ENCODE measurements at regions of chr17 and their contacts with region 1.

Region 1: GRCh38 chr17:4966844-4967538 is 626 bp downstream of the SPAG7 start:
- DNase-seq: peak; percentile 100
- ATAC-seq: peak; percentile 89 to 95
- H3K4me3 ChIP-seq: peak overlapping the region; percentile 63
- H3K27ac ChIP-seq: peak overlapping the region; percentile 94 to 95
- H3K4me1 ChIP-seq: peaks cover 21% of the 10 kb centered on the region
- CTCF ChIP-seq: no peak
- EP300 ChIP-seq: no peak
- POLR2A ChIP-seq: peak; percentile 59; the same call in 1 of the 2 replicates
- RAD21 ChIP-seq: peak in 1 of 2 experiments; percentile 10; a peak in 1 of 5 replicates

Region 2: GRCh38 chr17:4895657-4896331 is 71.2 kb before region 1 on chr17:
- CTCF ChIA-PET with region 1: no interaction called
- POLR2A ChIA-PET with region 1: no interaction called
- DNase-seq: no peak
- ATAC-seq: peak in 1 of 2 experiments; percentile 42; a peak in 3 of 6 replicates
- H3K4me3 ChIP-seq: no peak overlapping the region
- H3K27ac ChIP-seq: no peak overlapping the region
- H3K4me1 ChIP-seq: no peaks in the 10 kb centered on the region
- CTCF ChIP-seq: no peak
- EP300 ChIP-seq: no peak
- POLR2A ChIP-seq: no peak
- RAD21 ChIP-seq: 0 out of 5 replicates have a peak, but pooled peaks of 1 of the 2 experiments have one; percentile 3

Region 3: DNA sequence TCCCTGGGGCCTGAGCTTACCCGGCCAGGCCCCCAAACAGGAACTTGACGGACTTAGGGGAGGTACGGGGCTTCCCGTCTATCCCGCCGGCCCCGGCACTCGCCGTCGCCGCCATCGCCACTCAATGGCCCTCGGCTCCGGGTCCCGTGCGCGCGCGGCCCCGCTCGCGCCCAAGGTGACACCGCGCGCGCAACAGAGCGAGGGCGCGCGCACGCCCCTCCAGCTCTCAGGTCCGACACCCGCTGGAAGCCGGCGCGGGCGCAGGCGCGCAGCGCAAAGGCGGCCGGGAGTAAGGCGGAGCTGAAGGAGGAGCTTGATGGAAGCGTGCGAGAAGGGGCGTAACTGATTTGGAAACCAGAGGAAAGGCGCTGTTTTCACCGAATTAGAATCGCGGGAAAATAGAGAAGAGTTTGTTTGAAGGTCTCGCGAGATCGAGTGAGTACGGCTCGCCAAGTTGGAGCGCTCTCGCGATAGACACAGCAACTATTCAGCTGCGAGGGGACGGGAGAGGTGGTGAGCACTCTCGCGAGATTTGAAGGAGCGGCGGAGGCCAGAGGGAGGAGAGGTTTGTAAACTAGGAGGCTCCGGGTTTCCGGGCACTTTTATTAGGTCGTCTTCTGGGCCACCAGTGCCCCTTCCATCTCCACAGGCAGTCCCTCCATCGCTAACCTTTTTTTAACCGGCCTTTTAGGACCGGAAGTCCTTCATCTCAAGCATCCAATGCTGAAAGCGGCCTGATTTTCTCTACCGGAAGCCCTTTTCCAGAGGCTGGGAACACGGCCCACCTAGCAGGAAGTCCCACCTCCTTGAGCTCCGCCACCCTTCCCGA is 27.0 kb before region 1 on chr17 and contains the starts of genes RNF167 and SLC25A11:
- CTCF ChIA-PET with region 1: interaction called, 10 read pairs
- POLR2A ChIA-PET with region 1: interaction called, 83 read pairs
- DNase-seq: peak; percentile 99 to 100
- ATAC-seq: peak; percentile 80 to 81
- H3K4me3 ChIP-seq: peak within 1 kb of the TSS; percentile 85
- H3K27ac ChIP-seq: peak within 1 kb of the TSS; percentile 89 to 93
- H3K4me1 ChIP-seq: peaks cover 49% of the 10 kb centered on the region
- CTCF ChIP-seq: no peak
- EP300 ChIP-seq: no peak
- POLR2A ChIP-seq: peak; percentile 91
- RAD21 ChIP-seq: 0 out of 5 replicates have a peak, but pooled peaks of 1 of the 2 experiments have one; percentile 5
- polyA plus RNA-seq, gene RNF167: 98.7 and 110 TPM in 2 replicates
- polyA plus RNA-seq, gene SLC25A11: 60.2 and 64.4 TPM in 2 replicates

Region 4: GRCh38 chr17:4948931-4949320 is 18.1 kb before region 1 on chr17:
- CTCF ChIA-PET with region 1: interaction called, 63 read pairs
- POLR2A ChIA-PET with region 1: interaction called, 78 read pairs
- DNase-seq: peak; percentile 95 to 98
- ATAC-seq: peak; percentile 47 to 69
- H3K4me3 ChIP-seq: peak overlapping the region; percentile 98
- H3K27ac ChIP-seq: peak overlapping the region; percentile 99
- H3K4me1 ChIP-seq: peaks cover 54% of the 10 kb centered on the region
- CTCF ChIP-seq: no peak
- EP300 ChIP-seq: no peak
- POLR2A ChIP-seq: peak; percentile 64
- RAD21 ChIP-seq: no peak

Region 5: GRCh38 chr17:4956493-4957061 is 10.4 kb before region 1 on chr17:
- CTCF ChIA-PET with region 1: interaction called, 63 read pairs
- POLR2A ChIA-PET with region 1: interaction called, 78 read pairs
- DNase-seq: no peak
- ATAC-seq: no peak
- H3K4me3 ChIP-seq: no peak overlapping the region
- H3K27ac ChIP-seq: no peak overlapping the region
- H3K4me1 ChIP-seq: peaks cover 17% of the 10 kb centered on the region
- CTCF ChIP-seq: peak; percentile 24; the same call in 2 of the 3 replicates
- EP300 ChIP-seq: no peak
- POLR2A ChIP-seq: no peak
- RAD21 ChIP-seq: no peak

Region 6: DNA sequence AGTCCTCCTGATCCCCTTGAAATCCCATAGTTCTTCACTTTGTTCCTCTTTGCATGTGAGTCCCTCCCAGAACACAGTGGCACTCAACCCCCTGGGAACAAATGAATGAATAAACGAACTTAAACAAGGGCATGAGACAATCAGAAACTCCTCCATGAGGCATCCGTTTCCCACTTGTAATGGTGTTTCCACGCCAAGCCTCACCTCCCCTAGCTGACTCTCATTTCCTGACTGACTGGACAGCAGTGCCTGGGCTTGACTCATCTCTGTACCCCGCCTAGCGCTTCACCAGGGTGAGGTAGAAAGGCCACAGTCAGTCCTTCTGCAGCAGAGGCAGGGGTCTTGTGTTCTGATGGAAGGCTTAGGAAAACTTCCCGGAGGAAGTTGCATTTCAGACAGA is 44.9 kb after region 1 on chr17:
- CTCF ChIA-PET with region 1: no interaction called
- POLR2A ChIA-PET with region 1: no interaction called
- DNase-seq: no peak
- ATAC-seq: no peak
- H3K4me3 ChIP-seq: no peak overlapping the region
- H3K27ac ChIP-seq: no peak overlapping the region
- H3K4me1 ChIP-seq: no peaks in the 10 kb centered on the region
- CTCF ChIP-seq: no peak
- EP300 ChIP-seq: no peak
- POLR2A ChIP-seq: no peak
- RAD21 ChIP-seq: no peak

Measured in A549 (cell line).